Breast epithelium (tissue), 4 donors: ENCODE measurements at regions of chr12 and their contacts with region 1.

Region 1: GRCh38 chr12:97368455-97369163 is 94.0 kb upstream of the RMST start:
- DNase-seq: no peak
- H3K4me3 ChIP-seq: no peak overlapping the region
- H3K27ac ChIP-seq: no peak overlapping the region
- H3K4me1 ChIP-seq: no peaks in the 10 kb centered on the region
- H3K27me3 ChIP-seq: no peaks in the 10 kb centered on the region
- CTCF ChIP-seq: no peak
- POLR2A ChIP-seq: no peak

Region 2: DNA sequence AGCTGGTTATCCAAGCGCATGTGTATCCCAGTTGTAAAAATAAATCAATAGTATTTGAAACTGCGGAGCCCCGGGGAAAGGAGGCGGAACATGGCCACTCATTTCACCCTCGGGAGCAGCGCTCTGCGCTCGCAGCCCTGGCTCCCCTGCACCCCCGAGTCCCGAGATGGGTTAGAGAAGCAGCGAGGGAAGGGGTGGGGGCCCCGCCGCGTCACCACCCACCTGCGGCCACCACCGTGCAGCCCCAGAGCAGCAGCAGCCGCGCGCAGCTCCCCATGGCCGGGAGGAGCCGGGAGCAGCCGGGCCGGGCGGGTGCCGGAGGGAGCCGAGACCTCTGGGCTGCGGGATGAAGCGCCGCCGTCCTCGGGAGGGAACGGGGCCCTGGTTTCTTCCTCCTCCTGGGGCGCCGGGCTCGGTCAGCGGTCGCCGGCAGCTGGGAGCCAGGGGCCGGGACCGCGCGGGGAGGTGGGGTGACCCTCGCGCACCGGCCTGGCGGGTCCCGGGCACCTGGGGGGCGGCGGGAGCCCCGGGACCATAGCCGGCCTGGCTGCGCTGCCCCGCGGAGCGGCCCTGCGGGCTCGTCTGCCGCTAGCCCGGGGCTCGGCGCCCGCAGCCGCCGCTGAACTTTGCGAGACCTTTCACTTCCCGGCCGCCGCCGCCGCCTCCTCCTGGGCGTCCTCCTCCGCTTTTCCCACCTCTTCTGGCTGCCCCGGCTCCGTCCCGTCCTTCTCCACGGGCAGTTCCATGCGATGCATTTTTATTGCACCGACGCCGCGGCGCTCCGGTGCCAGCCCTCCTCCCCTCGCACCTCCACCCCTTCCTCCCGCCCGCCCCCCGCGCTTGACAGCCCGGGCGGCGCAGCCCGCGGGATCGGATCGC is 1578.3 kb before region 1 on chr12 and contains the start of gene NTN4:
- intact Hi-C with region 1: loop called (anchors 10 kb)
- DNase-seq: peak; percentile 52 to 57
- H3K4me3 ChIP-seq: peak within 1 kb of the TSS; percentile 85 to 89 (median 88)
- H3K27ac ChIP-seq: peak within 1 kb of the TSS; percentile 96 to 98
- H3K4me1 ChIP-seq: no peaks in the 10 kb centered on the region
- H3K27me3 ChIP-seq: no peaks in the 10 kb centered on the region
- CTCF ChIP-seq: no peak
- POLR2A ChIP-seq: peak; percentile 12
- total RNA-seq, gene NTN4: 27.4 to 188 (median 110) TPM

Region 3: GRCh38 chr12:96534339-96534738 is 834.3 kb before region 1 on chr12:
- intact Hi-C with region 1: no loop called
- DNase-seq: no peak
- H3K4me3 ChIP-seq: no peak overlapping the region
- H3K27ac ChIP-seq: no peak overlapping the region
- H3K4me1 ChIP-seq: no peaks in the 10 kb centered on the region
- H3K27me3 ChIP-seq: no peaks in the 10 kb centered on the region
- CTCF ChIP-seq: no peak
- POLR2A ChIP-seq: no peak

Region 4: DNA sequence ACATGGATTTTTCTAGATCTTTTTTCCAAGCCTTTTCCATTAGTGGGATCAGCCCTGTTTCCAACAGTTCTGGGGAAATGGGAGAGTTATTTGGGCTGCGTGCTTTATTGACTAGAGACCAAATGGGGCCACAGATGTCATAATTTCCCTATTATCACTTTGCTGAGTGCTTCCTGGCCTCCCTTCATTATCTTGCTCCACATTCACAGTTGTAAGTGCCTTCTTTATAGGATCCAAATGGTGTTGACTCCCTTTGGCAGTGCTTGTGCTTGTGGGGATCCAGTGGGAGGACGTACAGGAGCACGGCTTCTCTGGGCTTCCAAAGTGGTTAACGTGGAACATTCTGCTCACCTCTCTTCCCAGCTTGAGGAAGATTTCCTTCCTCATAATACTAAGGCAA is 47.0 kb before region 1 on chr12:
- intact Hi-C with region 1: no loop called
- DNase-seq: no peak
- H3K4me3 ChIP-seq: no peak overlapping the region
- H3K27ac ChIP-seq: no peak overlapping the region
- H3K4me1 ChIP-seq: no peaks in the 10 kb centered on the region
- H3K27me3 ChIP-seq: peaks cover 0 to 3% of the 10 kb centered on the region in 2 donors
- CTCF ChIP-seq: no peak
- POLR2A ChIP-seq: no peak

Region 5: DNA sequence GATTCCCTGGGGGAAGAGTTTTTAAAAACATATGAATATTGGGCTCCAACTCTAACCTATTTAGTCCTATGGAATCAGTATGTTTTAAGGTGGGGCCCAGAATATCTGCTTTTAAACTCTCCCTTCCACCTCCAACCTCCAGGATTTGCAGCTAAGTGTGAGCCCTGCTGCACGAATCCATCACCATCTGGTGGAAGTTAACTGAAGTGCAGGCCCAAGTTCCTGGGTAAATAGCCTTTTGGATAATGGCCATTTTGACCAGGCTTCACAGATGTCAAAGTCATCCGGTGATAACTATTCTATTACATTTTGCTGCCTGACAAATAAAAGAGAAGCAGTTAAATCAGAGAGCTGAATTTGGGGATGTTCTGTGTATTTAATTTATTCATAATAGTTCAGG is 35.9 kb after region 1 on chr12:
- intact Hi-C with region 1: no loop called
- DNase-seq: no peak
- H3K4me3 ChIP-seq: no peak overlapping the region
- H3K27ac ChIP-seq: no peak overlapping the region
- H3K4me1 ChIP-seq: no peaks in the 10 kb centered on the region
- H3K27me3 ChIP-seq: no peaks in the 10 kb centered on the region
- CTCF ChIP-seq: peak; percentile 40 to 71 (median 58)
- POLR2A ChIP-seq: no peak

Region 6: DNA sequence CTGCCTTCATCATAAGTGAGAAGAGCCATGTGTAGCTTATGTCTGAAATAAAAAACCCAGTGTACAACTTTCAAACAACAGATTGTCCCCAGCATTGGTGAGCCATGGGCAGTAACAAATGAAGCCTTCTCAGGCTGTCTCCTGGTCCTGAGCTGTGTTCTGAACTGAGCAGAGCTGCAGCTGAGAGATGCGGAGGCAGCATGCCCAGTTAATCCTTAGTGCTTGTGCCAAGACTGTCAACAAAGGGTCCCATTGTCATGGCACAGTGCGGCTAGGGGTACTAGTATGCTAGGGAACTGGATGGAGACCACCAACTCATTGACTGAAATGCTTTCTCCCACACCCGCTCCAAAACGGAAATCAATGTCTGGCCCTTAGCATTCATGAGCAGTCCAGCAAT is 248.3 kb after region 1 on chr12:
- intact Hi-C with region 1: loop called (anchors 5 kb)
- DNase-seq: no peak
- H3K4me3 ChIP-seq: no peak overlapping the region
- H3K27ac ChIP-seq: no peak overlapping the region
- H3K4me1 ChIP-seq: no peaks in the 10 kb centered on the region
- H3K27me3 ChIP-seq: no peaks in the 10 kb centered on the region
- CTCF ChIP-seq: no peak
- POLR2A ChIP-seq: no peak